ENCODE measurements at regions of chr14 and their contacts with region 1.

Region 1: DNA sequence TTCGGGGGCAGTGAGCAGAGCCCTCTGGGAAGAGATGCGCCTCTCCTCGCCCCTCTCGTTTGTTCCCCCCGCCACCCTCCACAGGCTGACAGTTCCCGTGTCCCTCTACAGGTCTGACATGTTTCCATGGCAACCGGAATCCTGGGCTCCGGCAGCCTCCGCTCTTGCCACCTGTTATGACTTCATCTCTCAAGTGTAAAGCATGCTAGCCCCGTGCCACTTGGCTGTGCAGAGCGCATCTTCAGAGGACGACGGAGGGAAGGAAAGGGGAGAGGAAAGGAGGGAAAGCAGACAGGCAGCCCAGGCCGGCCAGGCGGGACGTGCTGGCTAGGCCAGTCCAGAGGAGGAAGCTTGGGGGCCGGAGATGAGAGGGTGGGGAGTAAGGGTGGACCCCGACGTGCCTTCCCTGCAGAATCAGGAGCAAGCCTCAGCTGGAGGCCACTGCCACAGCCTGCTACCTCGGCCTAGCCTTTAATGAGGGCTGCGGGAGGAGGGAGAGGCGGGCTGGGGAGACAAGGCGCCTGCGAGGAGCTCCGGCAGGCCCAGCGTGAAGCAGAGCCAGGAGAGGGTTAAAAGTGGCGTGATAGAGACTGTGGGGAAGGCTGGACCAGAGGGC is 214.3 kb downstream of the DPF3 start:
- DNase-seq: no peak
- ATAC-seq: peak; percentile 15 to 26
- H3K4me3 ChIP-seq: no peak overlapping the region
- H3K27ac ChIP-seq: no peak overlapping the region
- H3K4me1 ChIP-seq: no peaks in the 10 kb centered on the region
- H3K27me3 ChIP-seq: no peaks in the 10 kb centered on the region

Region 2: DNA sequence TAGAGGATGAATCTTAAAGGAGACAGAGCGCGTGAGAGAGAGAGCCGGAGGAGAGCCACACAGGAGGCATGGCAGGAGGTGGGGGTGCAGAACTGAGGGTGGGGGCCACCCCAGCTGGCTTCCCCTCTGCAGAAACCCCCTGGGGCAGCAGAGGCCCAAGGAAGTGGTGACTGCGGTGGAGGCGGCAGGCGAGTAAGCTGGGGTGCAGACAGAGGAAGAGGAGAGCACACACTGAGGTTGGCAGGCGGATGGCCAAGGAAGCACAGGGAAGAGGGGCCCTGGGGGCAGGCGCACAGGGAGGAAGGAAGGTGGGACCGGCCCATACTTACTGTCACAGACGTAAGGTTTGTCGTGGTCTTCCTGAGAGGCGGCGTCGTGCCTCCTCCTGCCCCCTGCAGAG is 34.5 kb after region 1 on chr14:
- intact Hi-C with region 1: no loop called
- DNase-seq: peak in 1 of 3 donors; percentile 61
- ATAC-seq: no peak
- H3K4me3 ChIP-seq: no peak overlapping the region
- H3K27ac ChIP-seq: peak overlapping the region; percentile 88
- H3K4me1 ChIP-seq: peaks cover 8% of the 10 kb centered on the region
- H3K27me3 ChIP-seq: no peaks in the 10 kb centered on the region

Region 3: DNA sequence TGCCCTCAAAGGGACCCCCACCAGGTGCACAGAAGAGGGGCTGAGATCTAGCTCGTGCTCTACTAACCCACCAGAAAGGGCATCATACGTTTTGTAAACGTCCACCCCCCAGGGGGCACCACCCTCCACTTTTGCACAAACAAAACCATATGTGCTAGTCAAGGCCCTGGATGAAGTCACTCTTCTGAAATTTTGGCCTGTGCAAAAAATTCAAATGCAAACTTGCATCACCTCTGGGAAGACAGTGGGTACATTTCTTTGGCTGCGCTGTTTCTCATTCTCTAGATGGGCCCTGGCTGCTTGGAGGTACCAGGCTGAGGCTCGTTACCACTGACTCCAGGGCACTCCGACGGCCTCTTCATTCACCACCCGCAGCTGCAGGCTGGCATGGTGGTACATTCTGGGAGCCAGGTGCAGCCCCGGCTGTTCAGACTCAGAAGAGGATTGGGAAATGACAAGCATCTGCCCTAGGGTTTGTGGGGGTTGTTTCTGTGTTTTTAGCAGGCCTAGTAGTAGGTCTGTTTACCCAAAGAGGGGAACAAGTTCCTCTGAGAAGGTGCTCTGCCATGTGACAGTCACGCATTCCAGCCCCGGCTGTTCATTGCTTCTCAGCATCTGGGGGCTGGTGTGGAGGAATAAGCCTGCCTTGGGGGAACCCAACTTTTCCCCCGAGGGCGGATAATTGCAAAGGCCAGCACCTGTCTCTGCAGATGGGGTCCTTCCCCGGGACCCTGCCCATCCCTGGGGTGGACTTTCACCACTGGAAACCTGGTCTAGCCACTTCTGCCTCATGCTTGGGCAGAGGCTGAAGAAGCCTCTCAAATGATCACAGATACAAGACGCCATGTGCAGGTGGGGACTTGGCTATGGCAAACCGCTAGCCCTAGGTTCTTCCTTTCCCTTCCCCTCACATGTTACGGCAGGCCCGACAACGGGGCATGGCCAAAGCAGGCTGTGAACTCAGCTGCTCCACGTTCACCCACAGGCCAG is 66.6 kb after region 1 on chr14:
- intact Hi-C with region 1: loop called in 1 of 4 experiments (anchors 10 kb)
- DNase-seq: no peak
- ATAC-seq: no peak
- H3K4me3 ChIP-seq: no peak overlapping the region
- H3K27ac ChIP-seq: no peak overlapping the region
- H3K4me1 ChIP-seq: peaks cover 9% of the 10 kb centered on the region
- H3K27me3 ChIP-seq: no peaks in the 10 kb centered on the region

Measured in right cardiac atrium (tissue), 5 donors.